ENCODE measurements at regions of chr12 and their contacts with region 1.

Region 1: GRCh38 chr12:82326905-82327503 is 31.2 kb downstream of the CCDC59 start:
- DNase-seq: no peak
- H3K4me3 ChIP-seq: no peak overlapping the region
- H3K27ac ChIP-seq: no peak overlapping the region
- H3K27me3 ChIP-seq: no peaks in the 10 kb centered on the region
- CTCF ChIP-seq: peak; percentile 57

Region 2: GRCh38 chr12:81644503-81644902 is 682.5 kb before region 1 on chr12:
- CTCF ChIA-PET with region 1: interaction called, 17 read pairs
- POLR2A ChIA-PET with region 1: no interaction called
- DNase-seq: no peak
- H3K4me3 ChIP-seq: no peak overlapping the region
- H3K27ac ChIP-seq: no peak overlapping the region
- H3K27me3 ChIP-seq: no peaks in the 10 kb centered on the region
- CTCF ChIP-seq: peak; percentile 49

Measured in AG04450 (cell line).